ENCODE measurements at regions of chr14 and their contacts with region 1.

Region 1: DNA sequence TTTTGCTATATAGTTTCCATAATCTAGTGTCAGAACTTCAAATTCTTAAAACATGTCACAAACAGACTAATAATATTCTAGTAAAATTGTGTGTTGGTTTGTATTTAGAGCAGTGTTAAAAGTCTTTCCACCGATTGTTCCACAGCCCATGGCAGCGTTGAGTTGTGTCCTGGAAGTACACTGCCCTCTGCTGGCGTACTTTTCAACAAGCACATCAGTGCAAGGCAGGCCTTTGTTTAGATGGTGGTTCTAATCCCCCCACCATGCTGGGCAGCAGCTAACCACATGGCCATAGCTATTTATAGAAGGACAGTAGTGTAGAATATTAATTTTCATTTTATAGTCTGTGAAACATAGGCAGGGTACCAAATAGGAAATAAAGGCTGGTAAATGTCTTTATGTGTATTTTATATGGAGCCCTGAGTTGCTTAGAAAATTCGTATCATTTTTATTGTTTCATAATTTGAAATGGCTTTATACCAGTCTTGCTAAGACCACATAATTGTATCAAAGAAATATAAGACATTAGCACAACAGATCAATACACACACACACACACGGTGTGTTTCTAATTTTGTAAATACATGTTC is 235.4 kb downstream of the SEC23A start:
- DNase-seq: peak; percentile 79
- ATAC-seq: peak; percentile 93
- H3K4me3 ChIP-seq: no peak overlapping the region
- H3K27ac ChIP-seq: no peak overlapping the region
- H3K4me1 ChIP-seq: no peaks in the 10 kb centered on the region
- H3K27me3 ChIP-seq: no peaks in the 10 kb centered on the region
- CTCF ChIP-seq: peak; percentile 77
- POLR2A ChIP-seq: no peak
- RAD21 ChIP-seq: peak; percentile 77

Region 2: GRCh38 chr14:37709419-37710195 is 1158.0 kb before region 1 on chr14:
- CTCF ChIA-PET with region 1: no interaction called
- POLR2A ChIA-PET with region 1: no interaction called
- dilution Hi-C with region 1: no loop called
- in situ Hi-C with region 1: no loop called
- intact Hi-C with region 1: loop called (anchors 2 kb)
- DNase-seq: peak; percentile 39
- ATAC-seq: 0 out of 2 replicates have a peak, but pooled peaks have one; percentile 21
- H3K4me3 ChIP-seq: no peak overlapping the region
- H3K27ac ChIP-seq: no peak overlapping the region
- H3K4me1 ChIP-seq: peaks cover 5% of the 10 kb centered on the region
- H3K27me3 ChIP-seq: no peaks in the 10 kb centered on the region
- CTCF ChIP-seq: peak; percentile 57
- POLR2A ChIP-seq: no peak
- RAD21 ChIP-seq: peak; percentile 62

Region 3: GRCh38 chr14:37985826-37986470 is 881.7 kb before region 1 on chr14:
- CTCF ChIA-PET with region 1: no interaction called
- POLR2A ChIA-PET with region 1: no interaction called
- dilution Hi-C with region 1: no loop called
- in situ Hi-C with region 1: no loop called
- intact Hi-C with region 1: loop called (anchors 2 kb)
- DNase-seq: peak; percentile 65
- ATAC-seq: peak; percentile 62; the same call in 1 of the 2 replicates
- H3K4me3 ChIP-seq: no peak overlapping the region
- H3K27ac ChIP-seq: no peak overlapping the region
- H3K4me1 ChIP-seq: no peaks in the 10 kb centered on the region
- H3K27me3 ChIP-seq: no peaks in the 10 kb centered on the region
- CTCF ChIP-seq: peak; percentile 77
- POLR2A ChIP-seq: no peak
- RAD21 ChIP-seq: peak; percentile 70

Region 4: GRCh38 chr14:38208618-38209562 is 658.8 kb before region 1 on chr14:
- CTCF ChIA-PET with region 1: no interaction called
- POLR2A ChIA-PET with region 1: interaction called, 8 read pairs
- dilution Hi-C with region 1: no loop called
- in situ Hi-C with region 1: loop called (anchors 10 kb)
- intact Hi-C with region 1: loop called (anchors 5 kb)
- DNase-seq: peak; percentile 74
- ATAC-seq: peak; percentile 79
- H3K4me3 ChIP-seq: peak overlapping the region; percentile 61
- H3K27ac ChIP-seq: peak overlapping the region; percentile 8; the same call in 1 of the 2 replicates
- H3K4me1 ChIP-seq: peaks cover 11% of the 10 kb centered on the region; the same call in 1 of the 2 replicates
- H3K27me3 ChIP-seq: no peaks in the 10 kb centered on the region
- CTCF ChIP-seq: peak; percentile 53
- POLR2A ChIP-seq: no peak
- RAD21 ChIP-seq: peak; percentile 63

Region 5: DNA sequence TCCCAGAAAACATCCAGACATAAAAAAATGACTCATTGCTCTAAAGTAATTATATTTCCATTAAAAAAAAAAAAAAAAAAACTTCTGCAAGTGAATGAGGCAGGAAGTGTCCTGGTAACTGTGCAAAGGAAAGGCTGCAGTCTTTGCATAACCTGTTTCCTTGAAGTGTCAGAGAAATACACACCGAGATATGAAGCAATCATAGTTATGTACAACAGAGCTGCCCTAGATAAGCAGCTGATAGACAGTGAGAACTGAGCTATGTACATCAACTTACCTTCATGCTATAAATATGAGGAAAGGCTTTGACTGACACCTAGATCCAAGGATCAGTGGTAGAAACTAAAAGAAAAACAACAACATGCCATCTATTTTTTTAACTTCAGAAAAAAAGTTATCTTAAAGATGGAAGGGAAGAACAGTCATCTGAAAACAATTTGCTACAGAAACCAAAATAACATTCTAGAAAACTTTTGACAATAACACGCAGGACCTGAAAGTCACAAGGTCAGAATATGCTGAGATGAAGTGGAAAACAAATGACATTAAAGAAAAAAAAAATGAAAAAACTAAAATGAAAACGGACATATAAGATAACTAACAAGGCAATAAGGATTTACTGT is 27.8 kb before region 1 on chr14:
- CTCF ChIA-PET with region 1: no interaction called
- POLR2A ChIA-PET with region 1: interaction called, 10 read pairs
- dilution Hi-C with region 1: no loop called
- in situ Hi-C with region 1: no loop called
- intact Hi-C with region 1: no loop called
- DNase-seq: no peak
- ATAC-seq: no peak
- H3K4me3 ChIP-seq: no peak overlapping the region
- H3K27ac ChIP-seq: no peak overlapping the region
- H3K4me1 ChIP-seq: no peaks in the 10 kb centered on the region
- H3K27me3 ChIP-seq: no peaks in the 10 kb centered on the region; the same call in 1 of the 2 replicates
- CTCF ChIP-seq: no peak
- POLR2A ChIP-seq: no peak
- RAD21 ChIP-seq: no peak

Measured in IMR-90 (cell line).